ENCODE measurements at regions of chr2 and their contacts with region 1.

Region 1: GRCh38 chr2:24448797-24449196 is 42.3 kb upstream of the NCOA1 start:
- DNase-seq: no peak
- H3K4me3 ChIP-seq: no peak overlapping the region
- H3K27ac ChIP-seq: no peak overlapping the region
- H3K4me1 ChIP-seq: no peaks in the 10 kb centered on the region
- H3K27me3 ChIP-seq: no peaks in the 10 kb centered on the region
- CTCF ChIP-seq: no peak

Region 2: DNA sequence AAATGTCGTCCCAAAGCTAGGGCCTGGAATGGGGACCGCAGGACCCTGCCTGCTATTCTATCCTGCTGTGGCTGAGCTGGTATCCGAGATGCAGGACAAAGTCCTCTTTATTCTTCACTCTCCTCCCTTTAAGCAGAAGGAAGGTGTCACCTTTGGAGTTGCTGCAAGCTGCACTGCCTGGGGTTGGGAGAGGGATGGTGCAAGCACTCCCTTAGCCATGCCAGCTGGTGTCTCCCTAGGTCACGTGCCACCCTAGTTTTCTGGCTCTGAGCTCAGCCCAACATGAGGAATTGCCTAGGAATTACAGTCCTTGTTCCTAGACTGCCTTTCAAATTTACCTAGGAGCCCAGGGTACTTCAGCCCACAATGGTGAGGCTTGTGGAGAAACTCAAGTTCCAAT is 295.3 kb before region 1 on chr2:
- CTCF ChIA-PET with region 1: no interaction called
- POLR2A ChIA-PET with region 1: no interaction called
- intact Hi-C with region 1: no loop called
- DNase-seq: no peak
- H3K4me3 ChIP-seq: no peak overlapping the region
- H3K27ac ChIP-seq: no peak overlapping the region
- H3K4me1 ChIP-seq: no peaks in the 10 kb centered on the region
- H3K27me3 ChIP-seq: no peaks in the 10 kb centered on the region
- CTCF ChIP-seq: no peak

Region 3: GRCh38 chr2:24471662-24472061 is 22.9 kb after region 1 on chr2:
- CTCF ChIA-PET with region 1: no interaction called
- POLR2A ChIA-PET with region 1: no interaction called
- intact Hi-C with region 1: no loop called
- DNase-seq: no peak
- H3K4me3 ChIP-seq: no peak overlapping the region
- H3K27ac ChIP-seq: no peak overlapping the region
- H3K4me1 ChIP-seq: peaks cover 9% of the 10 kb centered on the region
- H3K27me3 ChIP-seq: no peaks in the 10 kb centered on the region
- CTCF ChIP-seq: no peak

Region 4: DNA sequence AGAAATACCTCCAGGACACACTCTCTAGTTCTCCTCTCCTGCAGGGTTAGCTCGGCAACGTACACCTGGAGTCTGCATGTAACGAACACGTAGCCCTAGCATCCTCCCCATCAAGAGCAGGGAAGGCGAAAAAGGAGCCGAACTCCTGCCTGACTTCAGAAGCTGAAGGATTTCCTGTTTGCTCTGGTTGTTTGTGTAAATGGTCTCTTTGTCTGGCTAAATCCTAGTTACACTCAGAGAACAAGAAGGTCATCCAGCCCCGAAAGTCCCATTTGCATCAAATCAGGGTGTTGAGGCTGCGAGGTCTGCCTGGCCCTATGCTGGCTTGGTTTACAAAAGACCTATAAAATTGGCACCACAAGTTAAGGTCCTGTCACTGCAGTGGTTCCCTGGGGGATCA is 785.9 kb after region 1 on chr2:
- CTCF ChIA-PET with region 1: interaction called, 15 read pairs
- POLR2A ChIA-PET with region 1: no interaction called
- intact Hi-C with region 1: no loop called
- DNase-seq: no peak
- H3K4me3 ChIP-seq: no peak overlapping the region
- H3K27ac ChIP-seq: no peak overlapping the region
- H3K4me1 ChIP-seq: no peaks in the 10 kb centered on the region
- H3K27me3 ChIP-seq: no peaks in the 10 kb centered on the region
- CTCF ChIP-seq: no peak

Measured in PC-9 (cell line).